Psoas muscle (tissue), 8 donors: ENCODE measurements at regions of chr1 and their contacts with region 1.

Region 1: DNA sequence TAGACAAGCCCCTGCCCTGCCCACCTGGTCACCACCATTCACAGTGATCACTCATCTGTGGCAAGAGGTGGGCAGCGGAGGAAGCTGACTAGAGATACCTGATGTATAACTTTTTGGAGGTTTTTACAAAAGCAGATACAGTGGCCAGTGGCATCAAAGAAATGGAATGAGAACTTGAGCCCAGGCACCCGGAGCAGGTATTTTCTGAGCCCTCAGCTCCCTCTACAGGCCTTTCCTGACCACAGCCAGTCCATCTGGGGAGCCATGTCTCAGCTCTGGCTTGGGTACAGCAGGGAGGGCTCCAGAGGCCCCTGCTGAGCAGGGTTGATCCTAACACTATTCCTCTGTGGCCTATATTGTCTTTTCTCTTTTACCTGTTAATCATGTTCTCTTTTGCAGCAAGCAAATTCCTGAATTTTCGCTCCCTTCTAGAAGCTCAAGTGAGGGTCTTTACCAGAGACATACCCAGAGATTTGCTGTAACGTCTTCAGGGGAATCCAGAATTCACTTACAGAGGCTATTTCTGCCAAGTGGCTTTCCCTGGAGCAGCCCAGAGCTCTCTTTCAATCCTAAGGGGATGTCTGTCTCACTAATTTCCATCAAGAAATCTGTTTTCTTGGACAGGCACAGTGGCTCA is 27.3 kb downstream of the GPR157 start:
- DNase-seq: peak in 1 of 2 donors; percentile 72
- ATAC-seq: peak; percentile 75 to 87 (median 82)
- H3K4me3 ChIP-seq: no peak overlapping the region
- H3K27ac ChIP-seq: peak overlapping the region; percentile 8
- H3K4me1 ChIP-seq: peaks cover 15% of the 10 kb centered on the region
- H3K27me3 ChIP-seq: no peaks in the 10 kb centered on the region
- CTCF ChIP-seq: peak; percentile 72

Region 2: DNA sequence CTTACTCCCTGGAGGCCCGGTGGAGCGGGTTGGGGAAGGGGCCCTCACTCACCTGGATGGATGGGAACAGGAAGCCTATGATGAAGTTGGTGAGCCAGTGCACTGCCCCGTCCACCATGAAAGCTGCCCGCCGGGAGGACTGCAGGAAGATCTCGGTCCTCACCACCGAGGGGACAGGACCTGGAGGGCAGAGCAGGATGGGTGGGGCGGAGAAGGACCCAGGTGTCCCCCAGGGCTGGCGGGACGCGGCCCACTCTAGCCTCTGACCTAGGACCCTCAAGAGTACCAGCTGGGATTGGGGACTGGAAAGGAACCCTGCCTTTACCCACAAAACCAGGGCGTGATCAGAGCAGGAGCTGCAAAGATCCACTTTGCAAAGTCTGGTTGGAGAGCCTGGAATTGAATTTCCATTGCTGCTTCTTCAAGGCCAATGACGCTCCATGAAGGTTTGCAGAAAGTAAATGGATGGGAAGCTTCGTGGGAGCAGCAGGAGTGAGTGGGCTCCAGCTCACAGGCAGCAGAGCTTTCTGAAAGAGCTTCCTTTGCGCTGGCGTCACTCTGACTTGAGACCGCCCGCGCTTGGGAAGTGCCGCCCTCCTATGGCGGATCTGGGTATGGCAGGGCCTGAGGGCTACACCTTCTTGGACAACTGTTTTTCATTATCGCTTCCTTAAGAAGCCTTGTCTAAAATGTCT is 96.8 kb before region 1 on chr1:
- intact Hi-C with region 1: loop called (anchors 5 to 10 kb)
- DNase-seq: peak; percentile 74 to 76
- ATAC-seq: peak; percentile 80 to 89 (median 82)
- H3K4me3 ChIP-seq: no peak overlapping the region
- H3K27ac ChIP-seq: no peak overlapping the region
- H3K4me1 ChIP-seq: no peaks in the 10 kb centered on the region
- H3K27me3 ChIP-seq: no peaks in the 10 kb centered on the region
- CTCF ChIP-seq: peak; percentile 92